B cell (primary cell): ENCODE measurements at regions of chr13 and their contacts with region 1.

Region 1: DNA sequence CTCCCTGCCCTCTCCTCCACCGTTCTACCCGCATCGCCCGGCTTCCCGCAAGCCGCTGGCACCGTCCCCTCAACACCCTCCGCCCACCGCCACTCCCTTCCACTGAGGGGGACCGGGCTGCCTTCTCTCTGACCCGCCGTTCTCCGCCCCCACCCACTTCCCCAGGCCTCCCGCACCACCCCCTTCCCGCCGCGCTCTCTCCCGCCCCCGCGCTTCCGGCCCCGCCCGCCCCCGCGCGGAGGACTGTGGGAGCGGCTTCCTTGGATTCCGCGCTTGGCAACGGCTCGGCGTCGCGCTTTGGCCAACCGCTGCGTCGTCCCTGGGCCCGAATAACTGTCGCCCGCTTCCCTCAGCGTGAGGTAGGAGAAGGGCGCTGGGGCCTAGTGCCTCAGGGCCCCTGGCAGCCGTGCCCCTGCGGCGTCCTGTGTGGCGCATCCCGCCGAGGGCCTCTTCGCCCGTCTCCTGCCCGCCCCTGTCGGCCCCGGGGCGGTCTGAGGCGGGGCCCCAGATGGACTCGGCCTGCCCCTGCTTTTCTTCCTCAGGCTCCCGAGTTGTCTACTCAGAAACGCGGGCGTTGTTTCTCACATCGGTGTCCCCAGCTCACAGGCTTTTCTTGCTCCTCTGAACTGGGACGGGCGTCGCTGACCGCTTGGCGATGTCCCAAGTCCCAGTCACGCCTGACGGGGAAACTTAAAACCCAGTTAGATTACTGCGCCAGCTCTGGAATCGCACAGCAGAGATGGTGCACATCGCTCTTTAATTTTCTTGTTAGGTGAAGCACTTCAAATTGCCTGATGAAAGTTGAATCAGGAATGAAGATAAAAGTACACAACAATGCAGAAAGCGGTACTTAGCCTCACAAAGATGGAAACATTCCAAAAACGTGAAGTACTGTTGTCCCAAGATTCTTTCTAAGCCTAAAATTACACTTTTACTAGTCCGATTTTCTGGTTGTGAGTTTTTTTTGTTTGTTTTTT is at the start of gene IFT88:
- DNase-seq: peak; percentile 84
- ATAC-seq: peak; percentile 90
- H3K4me3 ChIP-seq: peak within 1 kb of the TSS; percentile 64 to 72 (median 67)
- H3K4me3 Mint-ChIP-seq: peak within 1 kb of the TSS; percentile 94
- H3K27ac ChIP-seq: peak within 1 kb of the TSS; percentile 55 to 80
- H3K27ac Mint-ChIP-seq: peak within 1 kb of the TSS; percentile 93
- H3K4me1 ChIP-seq: peaks cover 11 to 12% of the 10 kb centered on the region in 2 donors
- H3K4me1 Mint-ChIP-seq: peaks cover 17% of the 10 kb centered on the region
- H3K27me3 ChIP-seq: no peaks in the 10 kb centered on the region
- H3K27me3 Mint-ChIP-seq: no peaks in the 10 kb centered on the region
- CTCF ChIP-seq: no peak
- total RNA-seq, gene IFT88: 20.2 and 23.3 TPM in 2 replicates

Region 2: DNA sequence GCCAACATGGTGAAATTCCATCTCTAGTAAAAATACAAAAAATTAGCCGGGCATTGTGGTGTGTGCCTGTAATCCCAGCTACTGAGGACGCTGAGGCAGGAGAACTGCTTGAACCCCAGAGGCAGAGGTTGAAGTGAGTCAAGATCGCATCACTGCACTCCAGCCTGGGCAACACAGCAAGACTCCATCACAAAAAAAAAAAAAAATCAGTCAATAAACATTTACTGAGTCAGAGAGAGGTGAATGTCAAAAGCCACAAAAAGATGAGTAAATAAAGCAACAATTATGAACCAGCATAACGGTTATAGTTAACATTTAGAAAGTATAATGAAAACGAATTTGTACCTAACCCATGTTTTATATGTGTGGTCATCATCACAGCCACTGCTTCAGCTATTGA is 807.5 kb before region 1 on chr13:
- CTCF ChIA-PET with region 1: no interaction called
- POLR2A ChIA-PET with region 1: no interaction called
- intact Hi-C with region 1: no loop called
- DNase-seq: no peak
- ATAC-seq: no peak
- H3K4me3 ChIP-seq: no peak overlapping the region
- H3K4me3 Mint-ChIP-seq: no peak overlapping the region
- H3K27ac ChIP-seq: no peak overlapping the region
- H3K27ac Mint-ChIP-seq: no peak overlapping the region
- H3K4me1 ChIP-seq: no peaks in the 10 kb centered on the region
- H3K4me1 Mint-ChIP-seq: peaks cover 26% of the 10 kb centered on the region
- H3K27me3 ChIP-seq: no peaks in the 10 kb centered on the region
- H3K27me3 Mint-ChIP-seq: no peaks in the 10 kb centered on the region
- CTCF ChIP-seq: no peak

Region 3: GRCh38 chr13:19959831-19960652 is 607.1 kb before region 1 on chr13:
- CTCF ChIA-PET with region 1: no interaction called
- POLR2A ChIA-PET with region 1: no interaction called
- intact Hi-C with region 1: loop called (anchors 10 kb)
- DNase-seq: peak; percentile 92
- ATAC-seq: peak; percentile 44
- H3K4me3 ChIP-seq: peak overlapping the region; percentile 78 to 90 (median 85)
- H3K4me3 Mint-ChIP-seq: peak overlapping the region; percentile 99
- H3K27ac ChIP-seq: peak overlapping the region; percentile 90 to 96
- H3K27ac Mint-ChIP-seq: peak overlapping the region; percentile 99
- H3K4me1 ChIP-seq: peaks cover 8 to 15% of the 10 kb centered on the region in 2 donors
- H3K4me1 Mint-ChIP-seq: peaks cover 31% of the 10 kb centered on the region
- H3K27me3 ChIP-seq: no peaks in the 10 kb centered on the region
- H3K27me3 Mint-ChIP-seq: no peaks in the 10 kb centered on the region
- CTCF ChIP-seq: peak; percentile 87

Region 4: DNA sequence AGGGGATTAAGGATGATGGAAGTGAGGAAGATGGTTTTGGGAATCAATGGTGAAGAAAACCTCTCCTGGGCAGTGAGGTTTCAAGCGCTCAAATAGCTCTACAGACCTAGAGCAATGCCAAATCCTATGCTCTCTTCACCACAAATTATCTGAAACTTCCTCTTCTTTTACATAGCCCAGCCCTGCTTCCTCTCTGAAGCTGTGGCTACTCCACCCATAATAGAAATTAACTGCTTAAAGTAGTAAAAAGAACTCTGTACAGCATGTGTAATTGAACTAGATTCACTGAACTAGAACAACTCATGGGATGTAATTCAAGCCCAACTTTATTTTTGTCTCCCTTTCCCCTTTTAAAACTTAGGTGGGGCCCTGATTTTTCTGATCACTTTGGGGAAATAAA is 20.6 kb before region 1 on chr13:
- CTCF ChIA-PET with region 1: no interaction called
- POLR2A ChIA-PET with region 1: interaction called, 4 read pairs
- intact Hi-C with region 1: loop called (anchors 2 kb)
- DNase-seq: peak; percentile 61
- ATAC-seq: peak; percentile 70
- H3K4me3 ChIP-seq: peak overlapping the region in 1 of 5 experiments; percentile 14
- H3K4me3 Mint-ChIP-seq: peak overlapping the region; percentile 42
- H3K27ac ChIP-seq: peak overlapping the region in 1 of 2 donors; percentile 64
- H3K27ac Mint-ChIP-seq: peak overlapping the region; percentile 62
- H3K4me1 ChIP-seq: peaks cover 37 to 46% of the 10 kb centered on the region in 2 donors
- H3K4me1 Mint-ChIP-seq: peaks cover 38% of the 10 kb centered on the region
- H3K27me3 ChIP-seq: no peaks in the 10 kb centered on the region
- H3K27me3 Mint-ChIP-seq: no peaks in the 10 kb centered on the region
- CTCF ChIP-seq: no peak

Region 5: DNA sequence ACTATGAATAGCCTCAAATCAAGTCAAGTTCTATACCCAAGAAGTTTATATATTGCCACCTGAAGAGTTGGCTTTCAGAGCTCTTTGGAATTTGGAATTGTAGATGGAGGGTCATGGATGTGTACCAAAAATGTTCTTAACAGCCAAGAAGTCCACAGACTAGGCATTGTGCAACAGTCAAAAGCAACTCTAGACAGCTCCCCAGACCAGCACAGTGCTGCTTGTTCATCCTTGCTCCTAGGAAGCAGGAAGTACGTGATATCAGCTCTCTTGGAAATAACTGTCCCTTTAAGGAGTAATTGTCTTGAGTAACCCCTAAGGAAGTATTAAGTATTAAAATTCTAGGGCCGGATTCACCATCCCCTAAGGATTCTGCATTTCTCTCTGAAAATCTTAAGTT is 105.6 kb after region 1 on chr13:
- CTCF ChIA-PET with region 1: no interaction called
- POLR2A ChIA-PET with region 1: no interaction called
- intact Hi-C with region 1: no loop called
- DNase-seq: no peak
- ATAC-seq: no peak
- H3K4me3 ChIP-seq: no peak overlapping the region
- H3K4me3 Mint-ChIP-seq: no peak overlapping the region
- H3K27ac ChIP-seq: no peak overlapping the region
- H3K27ac Mint-ChIP-seq: no peak overlapping the region
- H3K4me1 ChIP-seq: no peaks in the 10 kb centered on the region
- H3K4me1 Mint-ChIP-seq: no peaks in the 10 kb centered on the region
- H3K27me3 ChIP-seq: no peaks in the 10 kb centered on the region
- H3K27me3 Mint-ChIP-seq: no peaks in the 10 kb centered on the region
- CTCF ChIP-seq: no peak

Region 6: DNA sequence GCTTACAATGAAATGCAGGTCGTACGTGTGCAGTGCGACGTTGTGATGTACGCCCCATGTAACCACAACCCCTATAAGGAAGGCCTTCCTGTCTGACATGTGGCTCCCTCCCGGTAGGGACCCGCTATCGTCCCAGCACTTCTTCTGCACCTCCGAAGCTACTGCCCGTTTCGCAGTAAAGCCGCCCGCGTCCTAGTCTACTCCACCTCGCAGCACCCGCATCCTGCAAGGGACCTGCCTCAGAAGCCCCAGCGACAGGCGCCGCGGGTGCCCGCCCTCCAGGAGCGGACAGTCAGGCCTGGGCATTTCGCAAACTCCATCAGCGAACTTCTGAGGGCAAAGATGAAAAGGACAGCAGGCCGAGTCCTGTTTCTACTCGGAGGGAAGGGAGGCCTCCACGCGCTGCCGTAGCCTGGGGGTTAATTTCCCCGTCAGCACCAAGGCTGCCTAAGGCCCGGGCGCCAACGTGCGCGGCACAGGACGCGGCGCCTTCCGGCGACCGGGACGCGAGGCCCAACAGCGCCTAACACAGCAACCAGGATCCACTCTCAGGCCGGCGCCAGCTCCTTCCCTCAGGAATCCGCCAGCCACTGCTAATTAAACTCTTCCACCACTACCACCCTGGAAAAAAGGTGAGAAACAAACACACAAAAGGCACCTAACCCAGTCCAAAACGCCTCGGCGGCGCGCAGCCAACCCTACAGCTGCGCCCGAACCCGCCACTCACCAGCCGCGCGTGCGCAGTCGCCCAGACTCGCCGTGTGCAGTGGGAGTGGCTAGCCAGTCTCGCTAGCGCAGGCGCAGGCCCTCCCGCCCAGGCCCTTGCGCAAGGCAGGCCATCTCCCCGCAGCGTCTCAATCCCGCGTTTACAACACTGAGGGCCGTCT is 206.3 kb after region 1 on chr13 and contains the start of gene EEF1AKMT1:
- CTCF ChIA-PET with region 1: interaction called, 3 read pairs
- POLR2A ChIA-PET with region 1: no interaction called
- intact Hi-C with region 1: loop called (anchors 10 kb)
- DNase-seq: peak; percentile 94
- ATAC-seq: peak; percentile 95
- H3K4me3 ChIP-seq: peak within 1 kb of the TSS; percentile 53 to 80 (median 66)
- H3K4me3 Mint-ChIP-seq: peak within 1 kb of the TSS; percentile 96
- H3K27ac ChIP-seq: peak within 1 kb of the TSS; percentile 77 to 88
- H3K27ac Mint-ChIP-seq: peak within 1 kb of the TSS; percentile 100
- H3K4me1 ChIP-seq: peaks cover 7 to 15% of the 10 kb centered on the region in 2 donors
- H3K4me1 Mint-ChIP-seq: peaks cover 16% of the 10 kb centered on the region
- H3K27me3 ChIP-seq: no peaks in the 10 kb centered on the region
- H3K27me3 Mint-ChIP-seq: no peaks in the 10 kb centered on the region
- CTCF ChIP-seq: no peak
- total RNA-seq, gene EEF1AKMT1: 4.1 and 4.9 TPM in 2 replicates